IMR-90 (cell line): ENCODE measurements at regions of chr3 and their contacts with region 1.

Region 1: GRCh38 chr3:98022978-98023820 is 11.9 kb downstream of the GABRR3 start:
- DNase-seq: peak; percentile 68
- ATAC-seq: peak; percentile 87
- H3K4me3 ChIP-seq: no peak overlapping the region
- H3K27ac ChIP-seq: no peak overlapping the region
- H3K4me1 ChIP-seq: no peaks in the 10 kb centered on the region
- H3K27me3 ChIP-seq: peaks cover 4% of the 10 kb centered on the region
- CTCF ChIP-seq: peak; percentile 96
- POLR2A ChIP-seq: 0 out of 2 replicates have a peak, but pooled peaks have one; percentile 42
- RAD21 ChIP-seq: peak; percentile 97

Region 2: GRCh38 chr3:97719156-97719821 is 303.9 kb before region 1 on chr3:
- CTCF ChIA-PET with region 1: no interaction called
- POLR2A ChIA-PET with region 1: no interaction called
- dilution Hi-C with region 1: no loop called
- in situ Hi-C with region 1: no loop called
- intact Hi-C with region 1: loop called (anchors 1 kb)
- DNase-seq: peak; percentile 58
- ATAC-seq: peak; percentile 94
- H3K4me3 ChIP-seq: no peak overlapping the region
- H3K27ac ChIP-seq: no peak overlapping the region
- H3K4me1 ChIP-seq: no peaks in the 10 kb centered on the region
- H3K27me3 ChIP-seq: no peaks in the 10 kb centered on the region
- CTCF ChIP-seq: peak; percentile 87
- POLR2A ChIP-seq: no peak
- RAD21 ChIP-seq: peak; percentile 63

Region 3: GRCh38 chr3:97793420-97794019 is 229.7 kb before region 1 on chr3:
- CTCF ChIA-PET with region 1: interaction called, 13 read pairs
- POLR2A ChIA-PET with region 1: no interaction called
- dilution Hi-C with region 1: no loop called
- in situ Hi-C with region 1: loop called (anchors 5 kb)
- intact Hi-C with region 1: loop called (anchors 1 kb)
- DNase-seq: peak; percentile 64
- ATAC-seq: peak; percentile 65
- H3K4me3 ChIP-seq: no peak overlapping the region
- H3K27ac ChIP-seq: no peak overlapping the region
- H3K4me1 ChIP-seq: no peaks in the 10 kb centered on the region
- H3K27me3 ChIP-seq: no peaks in the 10 kb centered on the region
- CTCF ChIP-seq: peak; percentile 91
- POLR2A ChIP-seq: no peak
- RAD21 ChIP-seq: peak; percentile 89